Activated naive CD4-positive, alpha-beta T cell treated with anti-CD3 and anti-CD28 coated beads for 36 hours (primary cell): ENCODE measurements at regions of chr2 and their contacts with region 1.

Region 1: DNA sequence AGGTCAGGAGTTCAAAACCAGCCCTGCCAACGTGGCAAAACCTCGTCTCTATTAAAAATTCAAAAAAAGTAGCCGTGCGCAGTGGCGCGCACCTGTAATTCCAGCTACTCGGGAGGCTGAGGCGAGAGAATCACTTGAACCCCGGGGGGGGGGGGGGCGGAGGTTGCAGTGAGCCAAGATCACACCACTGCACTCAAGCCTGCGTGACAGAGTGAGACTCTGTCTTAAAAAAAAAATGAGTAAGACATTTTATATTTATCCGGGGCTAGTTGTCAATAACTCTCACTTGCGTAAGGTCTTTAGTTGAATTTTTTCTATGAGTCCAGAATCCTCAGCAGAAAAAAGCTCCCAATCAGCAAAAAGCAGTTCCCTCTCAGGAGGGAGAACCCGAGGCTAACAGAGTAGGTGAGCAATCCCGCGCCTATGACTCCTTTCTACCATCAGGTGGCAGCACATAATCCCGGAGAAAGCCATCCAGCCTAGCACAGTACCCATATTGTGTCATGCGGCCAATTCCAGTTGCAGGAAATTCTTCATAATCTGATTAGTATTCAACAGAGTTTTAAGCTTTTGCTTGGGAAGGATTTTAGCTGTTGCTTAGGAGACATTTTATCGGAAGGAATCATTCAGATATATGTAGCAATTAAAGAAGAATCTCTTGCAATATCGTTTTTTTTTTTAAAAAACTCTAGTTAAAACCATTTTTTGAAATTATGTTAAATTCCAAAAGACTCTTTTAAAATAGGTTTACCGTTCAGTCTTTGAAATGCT is 11.9 kb upstream of the CRYGA start:
- DNase-seq: peak; percentile 80
- H3K4me3 Mint-ChIP-seq: no peak overlapping the region
- H3K27ac Mint-ChIP-seq: no peak overlapping the region
- H3K4me1 Mint-ChIP-seq: peaks cover 2% of the 10 kb centered on the region
- H3K27me3 Mint-ChIP-seq: peaks cover 11% of the 10 kb centered on the region

Region 2: GRCh38 chr2:207944979-207945600 is 230.2 kb before region 1 on chr2:
- CTCF ChIA-PET with region 1: no interaction called
- intact Hi-C with region 1: no loop called
- DNase-seq: no peak
- H3K4me3 Mint-ChIP-seq: no peak overlapping the region
- H3K27ac Mint-ChIP-seq: no peak overlapping the region
- H3K4me1 Mint-ChIP-seq: no peaks in the 10 kb centered on the region
- H3K27me3 Mint-ChIP-seq: no peaks in the 10 kb centered on the region

Region 3: DNA sequence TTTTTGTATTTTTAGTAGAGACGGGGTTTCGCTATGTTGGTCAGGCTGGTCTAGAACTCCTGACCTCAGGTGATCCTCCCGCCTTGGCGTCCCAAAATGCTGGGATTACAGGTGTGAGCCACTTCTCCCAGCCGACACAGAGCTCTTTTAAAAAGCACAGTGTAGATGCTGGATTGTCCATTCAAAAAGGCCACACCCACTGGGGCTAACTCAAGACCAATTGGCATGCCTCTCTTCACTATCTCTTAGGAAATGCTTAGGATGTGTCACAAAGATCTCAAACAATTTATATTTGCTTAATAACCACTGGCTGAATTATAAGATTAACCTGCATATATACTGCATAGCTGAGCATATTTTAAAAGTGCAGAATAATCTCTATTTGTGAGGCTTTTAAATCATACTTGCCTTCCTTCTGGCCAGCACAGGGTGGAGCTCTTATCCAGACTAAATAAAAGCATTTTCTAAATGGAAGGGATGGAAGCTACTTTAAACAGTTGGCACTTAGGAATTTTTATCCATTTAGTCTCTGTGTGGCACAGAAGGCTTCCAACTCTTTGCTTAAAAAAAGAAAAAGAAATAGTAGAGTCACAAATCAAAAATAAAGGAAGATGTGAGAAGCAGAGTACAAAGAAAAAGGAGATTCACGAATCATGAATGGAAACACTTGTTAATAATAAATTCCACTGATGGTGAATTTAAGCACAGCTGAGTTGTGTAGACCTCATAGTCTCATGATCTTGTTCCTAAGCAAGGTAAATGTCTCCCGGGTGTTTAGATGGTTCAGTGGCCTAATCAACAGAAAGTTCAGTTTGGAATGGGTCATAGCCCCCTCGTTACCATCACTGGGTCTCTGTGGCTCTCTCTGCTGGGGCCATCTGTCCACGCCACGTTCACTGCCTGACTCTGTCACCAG is 73.3 kb before region 1 on chr2:
- CTCF ChIA-PET with region 1: interaction called, 9 read pairs
- intact Hi-C with region 1: loop called (anchors 2 kb)
- DNase-seq: no peak
- H3K4me3 Mint-ChIP-seq: no peak overlapping the region
- H3K27ac Mint-ChIP-seq: no peak overlapping the region
- H3K4me1 Mint-ChIP-seq: peaks cover 8% of the 10 kb centered on the region
- H3K27me3 Mint-ChIP-seq: peaks cover 2% of the 10 kb centered on the region

Region 4: GRCh38 chr2:208164951-208165755 is 10.1 kb before region 1 on chr2:
- CTCF ChIA-PET with region 1: interaction called, 13 read pairs
- intact Hi-C with region 1: no loop called
- DNase-seq: no peak
- H3K4me3 Mint-ChIP-seq: no peak overlapping the region
- H3K27ac Mint-ChIP-seq: no peak overlapping the region
- H3K4me1 Mint-ChIP-seq: no peaks in the 10 kb centered on the region
- H3K27me3 Mint-ChIP-seq: peaks cover 20% of the 10 kb centered on the region

Region 5: GRCh38 chr2:208373460-208374089 is 198.3 kb after region 1 on chr2:
- CTCF ChIA-PET with region 1: interaction called, 4 read pairs
- intact Hi-C with region 1: loop called (anchors 1 kb)
- DNase-seq: peak; percentile 45
- H3K4me3 Mint-ChIP-seq: no peak overlapping the region
- H3K27ac Mint-ChIP-seq: no peak overlapping the region
- H3K4me1 Mint-ChIP-seq: no peaks in the 10 kb centered on the region
- H3K27me3 Mint-ChIP-seq: peaks cover 2% of the 10 kb centered on the region

Region 6: GRCh38 chr2:209208211-209208610 is 1033.0 kb after region 1 on chr2:
- CTCF ChIA-PET with region 1: interaction called, 3 read pairs
- intact Hi-C with region 1: loop called (anchors 2 kb)
- DNase-seq: peak; percentile 23
- H3K4me3 Mint-ChIP-seq: no peak overlapping the region
- H3K27ac Mint-ChIP-seq: no peak overlapping the region
- H3K4me1 Mint-ChIP-seq: no peaks in the 10 kb centered on the region
- H3K27me3 Mint-ChIP-seq: no peaks in the 10 kb centered on the region